Ascending aorta (tissue), 2 donors: ENCODE measurements at regions of chr2 and their contacts with region 1.

Region 1: GRCh38 chr2:189580658-189581353 is at the start of gene SLC40A1:
- DNase-seq: peak; percentile 39 to 89
- H3K4me3 ChIP-seq: peak within 1 kb of the TSS; percentile 87 to 92
- H3K27ac ChIP-seq: peak within 1 kb of the TSS; percentile 90 to 94
- H3K4me1 ChIP-seq: peaks cover 0 to 22% of the 10 kb centered on the region in 2 donors
- H3K27me3 ChIP-seq: no peaks in the 10 kb centered on the region
- CTCF ChIP-seq: no peak
- total RNA-seq, gene SLC40A1: 40.8 TPM

Region 2: DNA sequence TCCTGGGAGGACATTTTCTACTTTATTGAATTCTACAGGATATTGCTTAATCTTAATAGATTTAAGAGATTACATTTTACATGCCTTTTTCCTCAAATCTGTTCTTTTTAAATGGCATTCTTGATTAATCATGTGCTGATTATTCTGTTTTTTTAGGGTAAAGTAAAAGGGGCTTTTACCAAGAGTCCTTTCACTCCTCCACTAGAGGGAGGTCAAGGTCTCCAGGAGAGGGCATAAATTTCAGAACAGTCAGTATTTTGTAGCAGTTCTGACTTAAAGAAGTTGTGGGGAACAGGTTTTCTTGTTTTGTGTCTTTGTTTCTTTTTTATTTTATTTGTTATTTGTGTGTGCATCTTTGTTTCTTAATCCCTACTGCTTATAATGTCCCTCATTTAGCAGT is 114.1 kb before region 1 on chr2:
- intact Hi-C with region 1: loop called (anchors 2 kb)
- DNase-seq: no peak
- H3K4me3 ChIP-seq: no peak overlapping the region
- H3K27ac ChIP-seq: peak overlapping the region; percentile 62 to 65
- H3K4me1 ChIP-seq: peaks cover 0 to 21% of the 10 kb centered on the region in 2 donors
- H3K27me3 ChIP-seq: no peaks in the 10 kb centered on the region
- CTCF ChIP-seq: peak; percentile 53 to 77 (median 62)

Region 3: DNA sequence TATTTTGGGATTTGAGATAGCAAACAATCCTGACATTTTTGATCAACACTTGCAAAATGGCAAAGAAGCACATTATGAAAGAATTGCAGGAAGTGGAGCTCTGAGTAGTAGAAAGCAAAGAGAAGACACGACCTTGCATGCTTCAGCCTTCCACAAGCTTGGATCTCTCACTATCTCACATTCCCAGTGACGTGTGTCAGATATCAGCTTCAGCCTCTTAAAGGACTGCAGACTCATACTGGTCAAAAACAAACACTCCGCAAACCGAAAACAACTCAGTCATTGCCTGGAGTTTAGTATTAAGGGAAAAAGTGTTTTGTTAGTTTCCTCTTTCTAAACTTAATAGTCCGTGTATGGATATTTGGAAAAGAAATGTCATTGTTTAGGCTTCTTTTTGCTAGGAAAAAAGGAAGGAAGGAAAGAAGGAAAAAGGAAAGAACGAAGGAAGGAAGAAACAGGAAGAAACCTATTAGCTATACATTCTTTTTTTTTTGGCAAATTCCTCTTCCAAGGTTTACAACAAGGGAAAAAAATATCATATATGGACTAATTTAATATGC is 32.4 kb after region 1 on chr2:
- intact Hi-C with region 1: loop called (anchors 2 kb)
- DNase-seq: peak in 1 of 2 donors; percentile 68
- H3K4me3 ChIP-seq: peak overlapping the region; percentile 44 to 60
- H3K27ac ChIP-seq: peak overlapping the region; percentile 75 to 78
- H3K4me1 ChIP-seq: peaks cover 5 to 13% of the 10 kb centered on the region in 2 donors
- H3K27me3 ChIP-seq: no peaks in the 10 kb centered on the region
- CTCF ChIP-seq: no peak